Motor neuron (in vitro differentiated cells): ENCODE measurements at regions of chr5 and their contacts with region 1.

Region 1: DNA sequence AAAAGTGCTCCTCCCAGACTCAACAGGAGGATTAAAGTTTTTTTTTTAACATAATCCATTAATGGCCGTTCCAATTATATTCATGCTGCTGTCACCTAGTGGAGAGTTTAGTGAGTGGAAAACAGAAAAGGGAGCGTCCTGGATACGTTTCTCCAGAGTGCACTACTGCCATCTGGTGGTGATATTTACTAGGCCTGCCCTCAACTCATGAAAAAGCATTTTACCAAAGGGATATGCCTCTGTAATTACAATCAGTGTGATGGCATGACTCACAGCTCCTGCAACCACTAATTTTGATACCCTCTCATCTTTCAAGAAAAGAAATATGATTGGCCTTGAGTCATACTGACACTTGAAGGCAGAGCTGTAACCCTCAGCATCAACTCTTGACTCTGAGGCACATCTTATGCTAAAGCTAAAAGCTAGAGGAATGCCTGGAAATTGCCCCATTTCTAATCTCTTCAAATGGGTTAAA is 20.0 kb downstream of the MINAR2 start:
- ATAC-seq: peak; percentile 91 to 98 (median 95)
- H3K4me3 ChIP-seq: no peak overlapping the region
- H3K27ac ChIP-seq: no peak overlapping the region
- H3K4me1 ChIP-seq: no peaks in the 10 kb centered on the region

Region 2: GRCh38 chr5:128881502-128882008 is 886.4 kb before region 1 on chr5:
- in situ Hi-C with region 1: no loop called
- ATAC-seq: peak in 1 of 8 experiments; percentile 32
- H3K4me3 ChIP-seq: no peak overlapping the region
- H3K27ac ChIP-seq: no peak overlapping the region
- H3K4me1 ChIP-seq: no peaks in the 10 kb centered on the region

Region 3: GRCh38 chr5:129172580-129172979 is 595.4 kb before region 1 on chr5:
- in situ Hi-C with region 1: loop called in 2 of 9 experiments (anchors 25 kb)
- ATAC-seq: peak in 2 of 8 experiments; percentile 49 to 52
- H3K4me3 ChIP-seq: no peak overlapping the region
- H3K27ac ChIP-seq: no peak overlapping the region
- H3K4me1 ChIP-seq: no peaks in the 10 kb centered on the region

Region 4: GRCh38 chr5:129631961-129632360 is 136.0 kb before region 1 on chr5:
- in situ Hi-C with region 1: no loop called
- ATAC-seq: no peak
- H3K4me3 ChIP-seq: no peak overlapping the region
- H3K27ac ChIP-seq: no peak overlapping the region
- H3K4me1 ChIP-seq: no peaks in the 10 kb centered on the region

Region 5: DNA sequence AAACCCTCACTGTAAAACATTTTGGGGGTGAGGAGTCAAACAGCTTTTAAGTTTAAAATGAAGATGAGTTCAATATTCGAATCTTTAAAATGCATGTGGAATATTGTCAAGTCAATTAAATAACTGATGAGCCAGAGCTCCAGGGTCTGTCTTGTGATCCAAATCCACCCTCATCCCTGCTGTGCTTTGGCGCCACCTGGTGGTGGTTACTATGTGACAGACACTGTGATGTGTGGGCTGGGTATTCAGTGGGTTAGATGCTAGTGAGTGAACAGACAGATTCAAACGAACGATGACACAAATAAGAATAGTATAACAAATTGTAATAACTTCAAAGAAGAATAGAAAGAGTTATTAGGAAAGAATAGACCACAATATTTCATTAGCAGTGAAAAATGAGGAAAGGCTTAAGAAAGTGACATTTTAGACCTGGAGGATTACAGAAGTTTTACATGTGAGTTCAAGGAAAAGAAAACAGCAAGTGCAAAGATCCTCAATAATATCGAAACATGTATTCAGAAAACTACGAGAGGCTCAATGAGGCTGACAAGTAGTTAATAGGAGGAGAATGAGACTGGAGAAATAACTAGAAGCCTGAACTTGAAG is 84.9 kb after region 1 on chr5:
- in situ Hi-C with region 1: loop called in 1 of 9 experiments (anchors 10 kb)
- ATAC-seq: peak; percentile 74 to 99 (median 93)
- H3K4me3 ChIP-seq: no peak overlapping the region
- H3K27ac ChIP-seq: no peak overlapping the region
- H3K4me1 ChIP-seq: no peaks in the 10 kb centered on the region